ENCODE measurements at regions of chr1 and their contacts with region 1.

Region 1: GRCh38 chr1:25990702-25991395 is 7.0 kb downstream of the PAFAH2 start:
- DNase-seq: peak; percentile 55
- ATAC-seq: peak; percentile 92
- H3K4me3 Mint-ChIP-seq: peak overlapping the region; percentile 86
- H3K27ac Mint-ChIP-seq: peak overlapping the region; percentile 93
- H3K4me1 Mint-ChIP-seq: peaks cover 38% of the 10 kb centered on the region
- H3K27me3 Mint-ChIP-seq: no peaks in the 10 kb centered on the region

Region 2: DNA sequence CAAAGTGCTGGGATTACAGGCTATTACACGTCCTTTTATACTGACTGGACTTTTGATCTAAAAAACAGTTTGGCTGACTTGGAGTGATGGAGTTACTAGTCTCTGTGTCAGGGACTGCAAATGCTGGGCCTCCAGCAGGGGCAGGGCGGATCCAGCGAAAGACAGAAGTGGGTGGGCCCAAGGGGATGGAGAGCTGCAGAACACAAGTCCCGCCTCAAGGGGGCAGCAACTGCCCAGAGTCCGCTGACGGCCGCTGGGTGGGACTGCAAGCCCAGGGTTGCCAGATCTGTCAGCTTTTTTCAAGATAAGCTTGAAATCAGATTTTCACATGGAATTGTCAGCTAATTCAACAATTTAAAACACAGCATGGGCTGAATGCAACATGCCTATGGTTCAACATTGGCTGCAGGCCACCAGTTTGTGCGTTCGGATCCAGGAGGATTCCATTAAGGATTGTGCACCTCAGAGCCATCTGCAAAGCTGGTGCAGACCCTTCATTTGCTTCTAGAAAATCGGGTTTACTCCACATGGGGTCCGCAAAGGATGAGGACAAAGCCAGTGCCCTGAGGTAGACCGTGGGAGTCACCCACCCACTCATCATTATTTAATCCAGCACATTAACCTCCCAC is 95.4 kb before region 1 on chr1:
- POLR2A ChIA-PET with region 1: interaction called, 18 read pairs
- DNase-seq: peak; percentile 90
- ATAC-seq: peak; percentile 93
- H3K4me3 Mint-ChIP-seq: no peak overlapping the region
- H3K27ac Mint-ChIP-seq: peak overlapping the region; percentile 75
- H3K4me1 Mint-ChIP-seq: peaks cover 19% of the 10 kb centered on the region
- H3K27me3 Mint-ChIP-seq: no peaks in the 10 kb centered on the region

Region 3: GRCh38 chr1:25904943-25905679 is 85.7 kb before region 1 on chr1:
- POLR2A ChIA-PET with region 1: interaction called, 20 read pairs
- DNase-seq: peak; percentile 95
- ATAC-seq: peak; percentile 77
- H3K4me3 Mint-ChIP-seq: peak overlapping the region; percentile 95
- H3K27ac Mint-ChIP-seq: peak overlapping the region; percentile 94
- H3K4me1 Mint-ChIP-seq: peaks cover 41% of the 10 kb centered on the region
- H3K27me3 Mint-ChIP-seq: peaks cover 20% of the 10 kb centered on the region

Region 4: GRCh38 chr1:25971066-25971810 is 19.6 kb before region 1 on chr1:
- POLR2A ChIA-PET with region 1: interaction called, 33 read pairs
- DNase-seq: no peak
- ATAC-seq: peak; percentile 81
- H3K4me3 Mint-ChIP-seq: peak overlapping the region; percentile 42
- H3K27ac Mint-ChIP-seq: peak overlapping the region; percentile 83
- H3K4me1 Mint-ChIP-seq: peaks cover 19% of the 10 kb centered on the region
- H3K27me3 Mint-ChIP-seq: no peaks in the 10 kb centered on the region

Region 5: GRCh38 chr1:26005434-26006105 is 14.7 kb after region 1 on chr1:
- POLR2A ChIA-PET with region 1: no interaction called
- DNase-seq: no peak
- ATAC-seq: no peak
- H3K4me3 Mint-ChIP-seq: no peak overlapping the region
- H3K27ac Mint-ChIP-seq: no peak overlapping the region
- H3K4me1 Mint-ChIP-seq: peaks cover 2% of the 10 kb centered on the region
- H3K27me3 Mint-ChIP-seq: peaks cover 13% of the 10 kb centered on the region

Region 6: DNA sequence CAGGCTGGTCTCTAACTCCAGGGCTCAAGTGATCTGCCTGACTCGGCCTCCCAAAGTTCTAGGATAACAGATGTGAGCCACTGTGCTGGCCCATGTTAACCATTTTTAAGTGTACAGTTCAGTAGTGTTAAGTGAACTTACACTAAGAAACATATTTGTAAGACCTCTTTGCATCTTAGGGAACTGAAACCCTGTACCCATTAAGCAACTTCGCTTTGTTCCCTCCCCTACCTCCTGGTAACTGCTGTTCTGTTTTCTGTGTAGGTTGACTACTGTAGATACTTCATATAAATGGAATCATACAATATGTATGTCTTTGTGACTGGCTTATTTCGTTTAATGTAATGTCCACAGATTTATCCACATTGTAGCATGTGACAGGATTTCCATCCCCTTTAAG is 941.7 kb after region 1 on chr1:
- POLR2A ChIA-PET with region 1: no interaction called
- DNase-seq: no peak
- ATAC-seq: no peak
- H3K4me3 Mint-ChIP-seq: no peak overlapping the region
- H3K27ac Mint-ChIP-seq: no peak overlapping the region
- H3K4me1 Mint-ChIP-seq: peaks cover 2% of the 10 kb centered on the region
- H3K27me3 Mint-ChIP-seq: no peaks in the 10 kb centered on the region